Motor neuron (in vitro differentiated cells): ENCODE measurements at regions of chr1 and their contacts with region 1.

Region 1: DNA sequence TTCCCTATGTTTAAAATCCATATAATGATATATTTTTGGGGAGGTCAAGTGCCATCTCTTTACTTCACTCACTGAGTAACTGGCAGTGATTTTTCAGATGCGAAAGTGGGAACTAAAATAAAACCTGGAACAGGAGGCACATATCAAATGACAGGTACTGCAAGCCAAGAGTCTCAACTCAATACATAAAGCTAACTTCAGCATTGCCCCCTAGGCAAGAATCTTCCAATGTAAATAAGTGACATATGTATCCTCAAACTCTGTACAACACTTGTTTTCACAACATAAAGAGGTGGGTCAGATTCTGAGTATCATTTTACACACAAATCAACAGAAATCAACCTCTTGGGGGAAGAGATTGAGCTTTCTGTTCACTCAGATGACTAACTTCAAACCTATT is 18.1 kb downstream of the DCAF8 start:
- ATAC-seq: peak in 1 of 8 experiments; percentile 81
- H3K4me3 ChIP-seq: no peak overlapping the region
- H3K27ac ChIP-seq: no peak overlapping the region
- H3K4me1 ChIP-seq: peaks cover 0 to 8% of the 10 kb centered on the region in 2 donors

Region 2: DNA sequence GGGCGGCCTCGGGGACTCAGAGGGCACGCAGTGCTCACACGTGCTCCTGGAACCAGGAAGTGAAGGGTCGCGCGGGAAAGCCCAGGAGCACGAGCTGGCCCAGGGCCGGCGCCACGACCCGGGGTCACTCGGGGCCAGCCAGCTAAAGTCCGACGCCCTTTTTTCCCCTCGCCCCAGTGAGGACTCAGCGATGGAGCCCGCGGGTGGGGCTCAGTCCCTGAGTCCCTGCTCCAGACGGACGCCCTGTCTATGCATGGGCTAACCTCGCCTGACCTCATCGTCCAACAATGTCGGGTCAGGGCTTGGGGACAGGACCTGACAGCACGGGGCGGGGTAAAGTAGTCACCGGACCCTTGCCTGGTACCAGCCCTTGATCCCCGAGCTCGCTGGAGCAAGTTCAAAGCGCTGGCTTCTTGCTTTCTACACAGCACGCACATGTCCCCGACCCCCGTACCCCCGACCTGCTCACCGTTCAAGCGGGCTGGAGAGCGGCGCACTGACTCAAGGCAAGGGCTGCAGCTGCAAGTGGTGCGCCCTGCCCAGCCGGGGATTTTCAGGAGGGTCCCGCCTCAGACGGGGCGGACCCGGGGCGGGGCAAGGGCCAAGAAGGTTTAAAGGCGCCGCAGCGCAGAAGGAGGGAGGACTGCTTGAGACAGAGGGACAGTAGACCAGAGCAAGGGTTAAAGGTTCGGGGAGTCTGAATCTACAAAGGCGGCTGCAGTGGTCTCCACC is 319.1 kb before region 1 on chr1 and contains the start of gene TAGLN2:
- in situ Hi-C with region 1: loop called in 1 of 9 experiments (anchors 25 kb)
- ATAC-seq: peak; percentile 44 to 78 (median 74)
- H3K4me3 ChIP-seq: peak within 1 kb of the TSS; percentile 24 to 43 (median 40)
- H3K27ac ChIP-seq: peak within 1 kb of the TSS in 1 of 2 donors; percentile 12
- H3K4me1 ChIP-seq: peaks cover 23 to 31% of the 10 kb centered on the region in 2 donors
- total RNA-seq, gene TAGLN2: 9.4 to 296 (median 93.0) TPM

Region 3: DNA sequence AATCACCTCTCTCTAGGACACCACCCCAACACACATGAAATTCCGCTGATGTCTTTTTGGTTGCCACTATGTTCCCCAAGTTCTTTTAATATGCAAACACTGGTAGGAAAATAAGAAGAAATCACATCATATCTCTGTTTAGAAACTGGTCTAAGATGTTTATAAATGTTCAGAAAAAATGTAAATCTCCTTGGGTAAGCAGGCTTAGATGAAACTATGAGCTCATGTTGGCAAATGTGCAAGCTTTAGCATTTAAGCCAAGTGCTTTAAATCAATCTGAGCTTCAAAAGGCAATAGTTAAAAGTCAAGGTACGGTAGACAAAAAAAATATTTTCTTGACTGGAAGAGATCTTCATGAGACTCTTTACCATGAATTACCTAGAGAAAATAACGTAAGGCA is 265.0 kb before region 1 on chr1:
- in situ Hi-C with region 1: no loop called
- ATAC-seq: no peak
- H3K4me3 ChIP-seq: no peak overlapping the region
- H3K27ac ChIP-seq: no peak overlapping the region
- H3K4me1 ChIP-seq: no peaks in the 10 kb centered on the region

Region 4: GRCh38 chr1:160911441-160911840 is 667.2 kb after region 1 on chr1:
- in situ Hi-C with region 1: no loop called
- ATAC-seq: no peak
- H3K4me3 ChIP-seq: no peak overlapping the region
- H3K27ac ChIP-seq: no peak overlapping the region
- H3K4me1 ChIP-seq: no peaks in the 10 kb centered on the region